Endothelial cell of umbilical vein (primary cell): ENCODE measurements at regions of chr7 and their contacts with region 1.

Region 1: GRCh38 chr7:116929914-116930913 is 23.1 kb upstream of the ST7 start:
- DNase-seq: peak; percentile 73
- H3K4me3 ChIP-seq: no peak overlapping the region
- H3K27ac ChIP-seq: no peak overlapping the region
- H3K4me1 ChIP-seq: peaks cover 3% of the 10 kb centered on the region
- H3K27me3 ChIP-seq: peaks cover 0 to 1% of the 10 kb centered on the region in 2 experiments
- CTCF ChIP-seq: peak; percentile 85 to 93
- POLR2A ChIP-seq: no peak

Region 2: GRCh38 chr7:116940689-116941088 is 10.5 kb after region 1 on chr7:
- CTCF ChIA-PET with region 1: interaction called, 10 read pairs
- POLR2A ChIA-PET with region 1: no interaction called
- dilution Hi-C with region 1: no loop called
- intact Hi-C with region 1: no loop called
- DNase-seq: no peak
- H3K4me3 ChIP-seq: no peak overlapping the region
- H3K27ac ChIP-seq: no peak overlapping the region
- H3K4me1 ChIP-seq: no peaks in the 10 kb centered on the region
- H3K27me3 ChIP-seq: peaks cover 1 to 4% of the 10 kb centered on the region in 2 experiments
- CTCF ChIP-seq: no peak
- POLR2A ChIP-seq: no peak

Region 3: GRCh38 chr7:116953727-116954442 is 23.7 kb after region 1 on chr7:
- CTCF ChIA-PET with region 1: interaction called, 13 read pairs
- POLR2A ChIA-PET with region 1: no interaction called
- dilution Hi-C with region 1: no loop called
- intact Hi-C with region 1: loop called (anchors 1 kb)
- DNase-seq: peak; percentile 80
- H3K4me3 ChIP-seq: peak overlapping the region; percentile 88 to 92 (median 89)
- H3K27ac ChIP-seq: peak overlapping the region; percentile 95
- H3K4me1 ChIP-seq: peaks cover 24% of the 10 kb centered on the region
- H3K27me3 ChIP-seq: no peaks in the 10 kb centered on the region
- CTCF ChIP-seq: no peak
- POLR2A ChIP-seq: peak; percentile 48

Region 4: DNA sequence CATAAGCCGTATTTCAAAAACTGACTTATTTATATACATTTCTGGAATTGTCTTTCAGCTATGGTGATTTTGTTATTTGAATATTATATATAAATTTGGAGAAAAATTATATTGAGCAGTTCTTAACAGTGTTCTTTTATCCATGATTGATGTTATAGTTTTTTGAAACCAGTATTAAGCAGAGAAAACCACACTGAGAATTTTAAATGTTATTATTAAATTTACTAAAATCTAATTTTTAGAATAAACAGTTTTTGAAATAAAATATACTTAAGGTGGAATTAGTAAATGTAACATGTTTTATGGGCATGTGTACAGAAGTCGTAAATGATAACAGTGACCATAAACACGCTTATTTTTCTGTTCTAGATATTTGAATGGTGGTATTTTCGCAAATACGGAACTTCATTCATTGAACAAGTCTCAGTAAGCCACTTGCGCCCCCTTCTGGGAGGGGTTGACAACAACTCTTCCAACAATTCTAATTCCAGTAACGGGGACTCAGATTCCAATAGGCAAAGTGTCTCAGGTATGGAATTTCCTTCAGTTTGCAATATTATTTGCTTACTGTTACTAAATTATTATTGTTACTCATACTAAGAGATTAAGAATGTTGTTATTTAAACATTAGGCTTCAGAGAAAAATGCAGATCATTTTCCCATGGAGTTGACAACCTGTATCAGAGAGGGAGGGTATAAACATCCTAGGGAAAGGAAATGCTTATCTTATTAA is 189.1 kb after region 1 on chr7:
- CTCF ChIA-PET with region 1: interaction called, 272 read pairs
- POLR2A ChIA-PET with region 1: no interaction called
- dilution Hi-C with region 1: no loop called
- intact Hi-C with region 1: loop called (anchors 1 kb)
- DNase-seq: peak; percentile 84
- H3K4me3 ChIP-seq: peak overlapping the region in 1 of 3 experiments; percentile 28
- H3K27ac ChIP-seq: no peak overlapping the region
- H3K4me1 ChIP-seq: peaks cover 16% of the 10 kb centered on the region
- H3K27me3 ChIP-seq: no peaks in the 10 kb centered on the region
- CTCF ChIP-seq: peak; percentile 74 to 79
- POLR2A ChIP-seq: no peak

Region 5: DNA sequence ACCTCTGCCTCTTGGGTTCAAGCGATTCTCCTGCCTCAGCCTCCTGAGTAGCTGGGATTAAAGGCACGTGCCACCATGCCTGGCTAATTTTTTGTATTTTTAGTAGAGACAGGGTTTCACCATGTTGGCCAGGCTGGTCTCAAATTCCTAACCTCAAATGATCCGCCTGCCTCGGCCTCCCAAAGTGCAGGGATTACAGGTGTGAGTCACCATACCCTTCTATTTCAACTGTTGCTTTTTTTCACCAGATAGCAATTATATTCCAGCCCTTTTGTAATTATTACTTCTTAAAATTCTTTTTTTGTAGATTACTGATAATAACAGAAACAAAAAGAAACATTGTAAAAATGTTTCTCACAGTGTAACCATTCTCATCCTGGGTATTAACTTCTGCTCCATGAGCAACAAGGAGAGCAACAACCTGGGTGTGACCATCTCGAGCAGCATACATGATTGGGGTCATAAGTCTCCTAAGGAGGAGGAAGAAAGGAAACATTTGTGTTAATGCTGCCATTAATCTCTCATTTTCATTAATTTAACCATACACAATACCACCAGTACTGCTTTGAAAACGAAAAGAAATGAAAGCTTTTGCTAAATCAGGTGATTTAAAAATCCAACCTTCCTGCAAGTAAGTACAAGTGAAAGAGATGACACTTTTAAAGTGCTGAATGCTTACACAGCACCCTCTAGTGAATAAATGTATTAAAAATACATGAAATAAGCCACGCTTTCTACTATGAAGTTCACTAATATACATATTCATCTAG is 455.3 kb after region 1 on chr7:
- CTCF ChIA-PET with region 1: interaction called, 6 read pairs
- POLR2A ChIA-PET with region 1: no interaction called
- dilution Hi-C with region 1: no loop called
- intact Hi-C with region 1: loop called (anchors 1 kb)
- DNase-seq: peak; percentile 47
- H3K4me3 ChIP-seq: no peak overlapping the region
- H3K27ac ChIP-seq: no peak overlapping the region
- H3K4me1 ChIP-seq: no peaks in the 10 kb centered on the region
- H3K27me3 ChIP-seq: no peaks in the 10 kb centered on the region
- CTCF ChIP-seq: peak in 1 of 2 donors; percentile 10
- POLR2A ChIP-seq: no peak

Region 6: DNA sequence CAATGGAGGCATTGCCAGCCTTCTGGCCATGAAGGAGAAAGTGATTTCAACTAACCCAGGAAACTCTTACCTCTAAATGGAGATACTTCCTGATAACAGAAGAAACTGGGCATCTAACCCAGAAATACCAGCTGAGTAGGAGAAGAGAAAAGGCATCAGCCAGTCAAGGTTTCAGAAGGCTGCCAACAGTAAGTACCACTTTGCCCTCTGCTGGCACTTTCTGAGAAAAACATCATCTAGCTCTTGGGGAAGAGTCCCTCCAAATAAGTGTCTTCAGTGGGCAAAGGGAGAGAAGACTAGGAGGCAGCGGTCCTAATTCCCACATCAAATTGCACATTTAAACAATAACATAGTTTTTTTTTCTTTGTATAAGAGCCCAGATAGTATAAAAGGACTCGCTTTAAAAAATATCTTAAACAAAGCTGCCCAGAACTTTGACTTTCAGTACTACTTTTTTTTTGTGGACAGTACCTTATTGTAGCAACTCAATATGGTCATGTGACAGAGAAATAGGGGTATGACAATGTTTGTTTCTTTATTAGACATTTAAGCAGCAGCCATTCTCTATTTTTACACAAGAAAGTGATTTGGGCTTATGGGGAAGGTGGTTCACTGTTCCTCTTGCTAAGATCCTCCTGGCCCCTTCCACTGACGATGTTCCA is 785.7 kb after region 1 on chr7:
- CTCF ChIA-PET with region 1: interaction called, 4 read pairs
- POLR2A ChIA-PET with region 1: no interaction called
- dilution Hi-C with region 1: no loop called
- intact Hi-C with region 1: loop called (anchors 10 kb)
- DNase-seq: peak; percentile 64
- H3K4me3 ChIP-seq: no peak overlapping the region
- H3K27ac ChIP-seq: no peak overlapping the region
- H3K4me1 ChIP-seq: no peaks in the 10 kb centered on the region
- H3K27me3 ChIP-seq: peaks cover 0 to 2% of the 10 kb centered on the region in 2 experiments
- CTCF ChIP-seq: peak; percentile 41 to 62
- POLR2A ChIP-seq: no peak